ENCODE measurements at regions of chr4 and their contacts with region 1.

Region 1: GRCh38 chr4:112231779-112232713 is at the start of gene AP1AR:
- DNase-seq: peak; percentile 61 to 87 (median 71)
- ATAC-seq: peak; percentile 73
- H3K4me3 ChIP-seq: peak within 1 kb of the TSS; percentile 71
- H3K4me3 Mint-ChIP-seq: peak within 1 kb of the TSS; percentile 86 to 99 (median 96)
- H3K27ac ChIP-seq: peak within 1 kb of the TSS; percentile 85
- H3K27ac Mint-ChIP-seq: peak within 1 kb of the TSS; percentile 91 to 100 (median 99)
- H3K4me1 ChIP-seq: peaks cover 3 to 12% of the 10 kb centered on the region in 2 donors
- H3K4me1 Mint-ChIP-seq: peaks cover 19 to 50% (median 33%) of the 10 kb centered on the region in 7 donors
- H3K27me3 ChIP-seq: no peaks in the 10 kb centered on the region
- H3K27me3 Mint-ChIP-seq: peaks cover under 1 to 4% (median 1%) of the 10 kb centered on the region in 5 donors
- total RNA-seq, gene AP1AR: 7.3 to 21.0 (median 17.0) TPM

Region 2: DNA sequence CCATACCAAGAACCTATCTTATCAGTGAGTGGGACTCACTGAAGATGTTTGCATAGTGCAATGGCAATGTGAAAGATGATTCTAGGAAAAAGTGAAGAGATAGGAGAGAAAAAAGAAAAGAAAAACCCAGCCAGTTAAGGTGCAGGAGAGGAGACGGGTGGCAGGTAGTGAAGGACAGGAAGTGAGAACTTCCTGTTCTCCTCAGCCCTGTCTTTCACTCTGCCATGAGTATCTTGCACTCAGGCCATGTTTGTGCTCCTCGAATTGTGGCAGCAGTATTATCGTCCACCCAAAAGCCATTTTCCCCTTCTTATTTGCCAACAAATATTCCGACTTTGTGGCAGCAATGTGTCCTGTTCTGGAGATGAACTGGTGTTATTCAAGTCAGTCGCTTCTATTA is 1764.6 kb before region 1 on chr4:
- CTCF ChIA-PET with region 1: no interaction called
- POLR2A ChIA-PET with region 1: no interaction called
- intact Hi-C with region 1: no loop called
- DNase-seq: no peak
- ATAC-seq: no peak
- H3K4me3 ChIP-seq: no peak overlapping the region
- H3K4me3 Mint-ChIP-seq: no peak overlapping the region
- H3K27ac ChIP-seq: no peak overlapping the region
- H3K27ac Mint-ChIP-seq: no peak overlapping the region
- H3K4me1 ChIP-seq: no peaks in the 10 kb centered on the region
- H3K4me1 Mint-ChIP-seq: peaks cover 6 to 11% (median 8%) of the 10 kb centered on the region in 7 donors
- H3K27me3 ChIP-seq: no peaks in the 10 kb centered on the region
- H3K27me3 Mint-ChIP-seq: peaks cover 0 to 11% (median 5%) of the 10 kb centered on the region in 5 donors

Region 3: DNA sequence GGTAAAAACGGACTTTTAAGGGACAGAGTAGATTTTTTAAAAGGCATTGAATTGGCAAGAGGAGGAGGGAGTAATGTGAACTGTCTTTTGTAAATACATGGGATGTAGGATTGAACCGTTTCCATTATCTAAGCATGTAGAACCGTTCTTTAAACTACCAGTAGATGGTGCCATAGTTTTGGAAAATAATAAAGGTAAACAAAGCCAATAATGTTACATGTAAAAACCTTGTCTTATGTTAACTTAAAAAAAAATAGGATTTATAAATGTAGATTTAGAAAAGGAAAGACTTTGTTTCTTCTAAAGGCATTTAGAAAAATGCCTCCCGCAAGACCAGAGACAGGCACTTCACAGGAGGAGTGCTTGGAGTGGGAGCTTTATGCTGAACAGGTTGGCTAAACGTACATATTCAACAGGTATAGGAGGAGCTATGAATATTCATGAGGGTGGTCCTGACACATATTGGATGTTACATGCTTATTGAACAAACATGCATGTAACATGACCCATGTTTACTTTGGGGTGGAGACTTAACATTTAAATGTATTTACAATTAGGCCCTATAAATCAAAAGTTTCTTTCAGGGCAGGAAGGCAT is 132.2 kb before region 1 on chr4:
- CTCF ChIA-PET with region 1: interaction called, 39 read pairs
- POLR2A ChIA-PET with region 1: interaction called, 4 read pairs
- intact Hi-C with region 1: loop called (anchors 1 kb)
- DNase-seq: peak in 7 of 9 donors; percentile 15 to 58 (median 41)
- ATAC-seq: peak; percentile 72
- H3K4me3 ChIP-seq: no peak overlapping the region
- H3K4me3 Mint-ChIP-seq: no peak overlapping the region
- H3K27ac ChIP-seq: no peak overlapping the region
- H3K27ac Mint-ChIP-seq: peak overlapping the region in 1 of 9 donors; percentile 25
- H3K4me1 ChIP-seq: no peaks in the 10 kb centered on the region
- H3K4me1 Mint-ChIP-seq: peaks cover 0 to 13% (median 0%) of the 10 kb centered on the region in 7 donors
- H3K27me3 ChIP-seq: no peaks in the 10 kb centered on the region
- H3K27me3 Mint-ChIP-seq: peaks cover 4 to 29% (median 10%) of the 10 kb centered on the region in 5 donors

Region 4: DNA sequence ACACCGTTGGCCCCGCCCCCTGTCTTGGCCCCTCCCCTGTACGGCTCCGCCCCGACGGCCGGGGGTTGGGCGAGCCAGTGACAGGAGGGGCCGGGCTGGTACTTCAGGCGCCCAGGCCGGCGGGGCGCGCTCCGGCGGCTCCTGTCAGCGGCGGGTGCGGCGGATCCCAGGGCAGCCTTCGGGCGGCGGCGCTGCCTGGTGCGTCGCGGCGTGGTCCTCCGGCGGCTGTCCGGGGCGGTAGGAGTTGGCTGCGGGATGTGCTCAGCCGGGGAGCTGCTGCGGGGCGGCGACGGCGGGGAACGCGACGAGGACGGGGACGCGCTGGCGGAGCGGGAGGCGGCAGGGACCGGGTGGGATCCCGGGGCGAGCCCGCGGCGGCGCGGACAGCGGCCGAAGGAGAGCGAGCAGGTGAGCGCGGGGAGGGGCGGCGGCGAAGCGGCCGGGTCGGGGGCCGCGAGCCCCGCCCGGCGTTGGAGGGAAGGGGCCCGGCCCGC is 86.7 kb before region 1 on chr4 and contains the start of gene FAM241A:
- CTCF ChIA-PET with region 1: interaction called, 5 read pairs
- POLR2A ChIA-PET with region 1: interaction called, 6 read pairs
- intact Hi-C with region 1: loop called (anchors 1 kb)
- DNase-seq: peak; percentile 81 to 92 (median 88)
- ATAC-seq: peak; percentile 98
- H3K4me3 ChIP-seq: peak within 1 kb of the TSS; percentile 89
- H3K4me3 Mint-ChIP-seq: peak within 1 kb of the TSS; percentile 90 to 99 (median 94)
- H3K27ac ChIP-seq: peak within 1 kb of the TSS; percentile 78
- H3K27ac Mint-ChIP-seq: peak within 1 kb of the TSS; percentile 75 to 98 (median 95)
- H3K4me1 ChIP-seq: peaks cover 0 to 12% of the 10 kb centered on the region in 2 donors
- H3K4me1 Mint-ChIP-seq: peaks cover 16 to 44% (median 40%) of the 10 kb centered on the region in 7 donors
- H3K27me3 ChIP-seq: no peaks in the 10 kb centered on the region
- H3K27me3 Mint-ChIP-seq: peaks cover 0 to 5% (median 0%) of the 10 kb centered on the region in 5 donors
- total RNA-seq, gene FAM241A: 1.2 to 2.4 (median 2.0) TPM

Region 5: GRCh38 chr4:112257098-112257497 is 25.1 kb after region 1 on chr4:
- CTCF ChIA-PET with region 1: interaction called, 4 read pairs
- POLR2A ChIA-PET with region 1: no interaction called
- intact Hi-C with region 1: loop called in 1 of 2 experiments (anchors 2 kb)
- DNase-seq: no peak
- ATAC-seq: no peak
- H3K4me3 ChIP-seq: no peak overlapping the region
- H3K4me3 Mint-ChIP-seq: no peak overlapping the region
- H3K27ac ChIP-seq: no peak overlapping the region
- H3K27ac Mint-ChIP-seq: no peak overlapping the region
- H3K4me1 ChIP-seq: no peaks in the 10 kb centered on the region
- H3K4me1 Mint-ChIP-seq: no peaks in the 10 kb centered on the region
- H3K27me3 ChIP-seq: no peaks in the 10 kb centered on the region
- H3K27me3 Mint-ChIP-seq: no peaks in the 10 kb centered on the region

Region 6: DNA sequence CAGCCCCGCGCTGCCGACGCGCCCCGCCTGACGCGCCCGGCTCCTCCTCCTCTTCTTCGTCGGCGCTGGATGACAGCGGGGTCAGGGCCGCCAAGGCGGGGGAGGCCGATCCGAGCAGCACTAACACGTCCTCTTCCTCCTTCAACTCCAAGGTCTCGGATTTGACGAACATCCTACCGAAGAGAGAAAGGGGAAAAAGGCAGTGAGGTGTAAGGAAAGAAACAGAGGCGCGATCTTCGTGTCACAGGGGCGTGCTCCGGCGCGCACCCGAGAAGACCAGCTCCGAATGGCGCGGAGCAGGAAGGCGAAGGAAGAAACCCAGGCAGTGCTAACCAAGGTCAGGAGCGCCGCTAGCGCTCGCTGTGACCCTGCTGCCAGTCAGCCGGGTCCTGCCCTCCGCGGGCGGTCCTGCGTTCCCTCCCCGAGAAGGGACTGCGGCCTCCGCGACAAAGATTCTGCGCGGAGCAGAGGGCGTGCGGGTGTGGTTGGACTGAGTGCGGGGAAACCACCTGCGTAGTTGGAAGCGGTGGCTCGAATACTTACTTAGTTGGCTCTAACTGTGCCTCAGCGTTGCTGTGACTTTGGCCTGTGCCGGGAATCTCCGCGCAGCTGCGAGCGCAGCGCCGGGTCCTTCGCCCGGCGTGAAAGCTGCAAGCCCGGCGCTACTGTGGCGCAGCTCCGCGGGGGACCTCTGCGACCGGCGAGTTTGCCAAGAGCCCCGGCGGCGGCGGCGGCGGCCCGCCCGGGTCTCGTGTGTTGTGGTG is 283.4 kb after region 1 on chr4:
- CTCF ChIA-PET with region 1: no interaction called
- POLR2A ChIA-PET with region 1: no interaction called
- intact Hi-C with region 1: loop called in 1 of 2 experiments (anchors 1 kb)
- DNase-seq: peak in 5 of 9 donors; percentile 21 to 66 (median 40)
- ATAC-seq: peak; percentile 66
- H3K4me3 ChIP-seq: peak overlapping the region; percentile 63
- H3K4me3 Mint-ChIP-seq: peak overlapping the region; percentile 85 to 99 (median 92)
- H3K27ac ChIP-seq: no peak overlapping the region
- H3K27ac Mint-ChIP-seq: peak overlapping the region in 4 of 9 donors; percentile 38 to 86 (median 66)
- H3K4me1 ChIP-seq: peaks cover 13 to 40% of the 10 kb centered on the region in 2 donors
- H3K4me1 Mint-ChIP-seq: peaks cover 37 to 66% (median 59%) of the 10 kb centered on the region in 7 donors
- H3K27me3 ChIP-seq: peaks cover 17 to 69% of the 10 kb centered on the region in 2 donors
- H3K27me3 Mint-ChIP-seq: peaks cover 91 to 99% (median 93%) of the 10 kb centered on the region in 5 donors